A549 (cell line): ENCODE measurements at regions of chr2 and their contacts with region 1.

Region 1: DNA sequence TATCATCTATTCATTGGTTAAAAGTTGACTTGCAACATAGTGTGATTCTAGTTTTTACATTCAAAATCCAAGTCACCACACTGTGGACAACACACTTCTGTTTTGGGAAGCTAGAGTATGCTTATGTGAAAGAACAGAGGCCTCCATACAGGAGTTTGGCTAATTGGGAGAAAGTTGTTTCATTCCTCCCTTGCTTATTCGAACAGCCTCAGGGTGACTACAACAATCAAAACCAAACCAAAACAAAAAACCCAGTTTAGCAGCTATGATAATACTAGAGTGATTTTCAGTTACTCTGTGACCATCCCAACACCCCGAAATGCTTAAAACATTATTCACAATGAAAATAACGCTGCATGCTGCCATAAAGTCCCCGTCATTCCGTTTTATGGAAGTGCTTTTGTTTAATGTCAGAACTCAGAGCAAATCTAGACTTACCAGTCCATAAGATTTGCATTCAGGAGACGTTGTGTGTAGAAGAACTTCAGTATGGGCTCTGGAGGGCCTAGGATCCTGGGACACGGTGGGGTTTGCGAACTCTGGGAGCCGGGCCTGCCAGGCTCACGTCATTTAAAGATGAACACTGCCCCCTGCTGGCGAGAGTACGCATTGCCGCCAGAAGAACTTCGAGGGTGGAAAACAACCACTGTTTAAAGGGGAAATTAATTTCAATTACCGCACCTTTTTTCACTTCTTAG is 111.4 kb downstream of the FTCDNL1 start:
- DNase-seq: peak; percentile 28 to 65
- ATAC-seq: peak; percentile 58 to 88; a peak in 4 of 6 replicates
- H3K4me3 ChIP-seq: no peak overlapping the region
- H3K27ac ChIP-seq: peak overlapping the region; percentile 36 to 61; a peak in 3 of 6 replicates
- H3K4me1 ChIP-seq: peaks cover 22% of the 10 kb centered on the region
- CTCF ChIP-seq: peak; percentile 88
- EP300 ChIP-seq: no peak
- POLR2A ChIP-seq: no peak
- RAD21 ChIP-seq: peak; percentile 92

Region 2: DNA sequence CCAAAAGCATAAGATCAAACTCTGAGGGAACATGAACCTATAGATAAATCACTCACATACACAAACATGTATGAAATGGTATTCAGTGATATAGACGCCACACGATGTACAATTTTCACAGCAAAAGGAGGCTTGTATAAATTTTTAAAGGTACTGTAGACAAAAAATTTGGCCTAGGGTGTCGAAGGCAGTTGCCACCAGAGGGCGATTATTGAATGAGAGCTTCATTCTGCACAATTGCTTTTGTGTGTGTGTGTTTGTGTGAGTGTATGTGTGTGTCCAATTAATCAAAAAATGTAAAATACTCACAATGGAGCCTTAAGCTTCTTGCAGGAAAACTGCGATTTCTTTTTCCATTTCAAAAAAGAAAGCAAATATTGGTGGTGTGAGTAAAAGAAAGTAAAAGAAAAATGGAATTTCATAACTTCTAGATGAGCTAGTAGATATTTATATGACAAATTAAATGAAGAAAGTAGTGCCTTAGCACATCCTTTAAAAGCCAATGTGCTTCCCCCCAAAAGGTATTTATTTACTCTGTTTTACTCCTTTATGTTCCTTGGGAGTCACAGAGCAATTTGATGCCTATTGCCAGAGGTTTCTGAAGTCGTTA is 1081.9 kb before region 1 on chr2:
- CTCF ChIA-PET with region 1: interaction called, 12 read pairs
- POLR2A ChIA-PET with region 1: no interaction called
- DNase-seq: peak in 1 of 2 experiments; percentile 36
- ATAC-seq: no peak
- H3K4me3 ChIP-seq: no peak overlapping the region
- H3K27ac ChIP-seq: no peak overlapping the region
- H3K4me1 ChIP-seq: no peaks in the 10 kb centered on the region
- CTCF ChIP-seq: peak; percentile 43
- EP300 ChIP-seq: no peak
- POLR2A ChIP-seq: no peak
- RAD21 ChIP-seq: peak; percentile 25 to 37; a peak in 3 of 5 replicates

Region 3: DNA sequence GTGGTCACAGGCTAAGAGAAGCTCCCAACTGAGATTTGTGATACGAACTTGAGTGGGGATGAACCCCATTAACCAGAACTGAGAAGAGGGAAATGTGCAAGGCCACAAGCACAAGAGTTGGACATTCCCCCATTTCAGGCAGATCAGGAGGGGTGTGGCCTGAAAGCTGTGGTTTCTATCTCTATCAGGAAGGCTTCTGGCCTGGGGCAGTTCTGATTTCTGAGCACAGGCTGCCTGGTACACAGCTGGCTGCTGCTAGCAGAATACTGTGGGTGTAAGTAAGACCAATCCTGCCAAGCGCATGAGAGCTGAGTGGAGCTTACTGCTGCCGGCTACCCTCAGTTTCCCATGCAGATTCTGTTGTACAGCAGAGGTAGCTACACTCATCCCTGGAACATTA is 766.4 kb before region 1 on chr2:
- CTCF ChIA-PET with region 1: no interaction called
- POLR2A ChIA-PET with region 1: no interaction called
- DNase-seq: no peak
- ATAC-seq: no peak
- H3K4me3 ChIP-seq: no peak overlapping the region
- H3K27ac ChIP-seq: no peak overlapping the region
- H3K4me1 ChIP-seq: no peaks in the 10 kb centered on the region
- CTCF ChIP-seq: no peak
- EP300 ChIP-seq: no peak
- POLR2A ChIP-seq: no peak
- RAD21 ChIP-seq: no peak

Region 4: GRCh38 chr2:199692489-199692888 is 47.1 kb before region 1 on chr2:
- CTCF ChIA-PET with region 1: interaction called, 17 read pairs
- POLR2A ChIA-PET with region 1: no interaction called
- DNase-seq: no peak
- ATAC-seq: no peak
- H3K4me3 ChIP-seq: no peak overlapping the region
- H3K27ac ChIP-seq: no peak overlapping the region
- H3K4me1 ChIP-seq: no peaks in the 10 kb centered on the region
- CTCF ChIP-seq: no peak
- EP300 ChIP-seq: no peak
- POLR2A ChIP-seq: no peak
- RAD21 ChIP-seq: no peak

Region 5: DNA sequence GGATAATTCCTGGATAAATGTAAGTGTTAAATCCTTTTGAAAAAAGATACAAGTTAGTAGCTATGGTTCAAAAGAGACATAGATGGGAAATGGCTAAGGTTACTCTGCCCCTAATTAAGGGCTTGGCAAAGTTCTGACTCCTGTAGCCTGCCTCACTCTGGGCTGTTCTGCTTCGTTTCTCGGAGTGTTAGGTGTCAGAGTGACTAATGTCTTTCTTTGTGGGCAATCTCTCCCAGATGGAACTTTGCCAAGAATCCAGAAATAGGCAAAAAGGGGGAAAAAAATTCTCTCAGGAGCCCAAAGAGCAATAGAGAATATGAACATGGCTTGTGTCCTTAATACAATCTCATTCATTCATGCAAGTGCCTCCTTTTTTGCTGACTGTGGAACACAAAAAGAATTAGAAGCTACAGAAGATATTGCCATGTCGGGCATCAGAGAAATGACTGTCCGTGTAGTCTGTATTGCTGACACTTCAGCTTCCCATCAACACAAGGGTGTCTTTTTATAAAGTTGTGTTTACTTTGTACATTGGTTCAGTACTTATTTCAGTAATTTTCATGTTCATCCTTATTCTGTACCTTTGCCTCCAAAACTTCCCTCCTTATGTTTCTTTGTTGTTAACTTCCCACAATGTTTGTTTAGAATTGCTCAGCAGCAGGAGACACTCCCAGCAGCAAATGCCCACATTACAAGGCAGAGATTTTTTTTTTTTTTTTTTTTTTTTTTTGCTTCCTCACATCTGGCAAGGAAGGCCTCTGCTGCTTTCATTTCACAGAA is 22.6 kb before region 1 on chr2:
- CTCF ChIA-PET with region 1: interaction called, 20 read pairs
- POLR2A ChIA-PET with region 1: no interaction called
- DNase-seq: peak; percentile 51
- ATAC-seq: peak; percentile 89 to 90
- H3K4me3 ChIP-seq: peak overlapping the region; percentile 9; the same call in 1 of the 3 replicates
- H3K27ac ChIP-seq: peak overlapping the region; percentile 47 to 50; a peak in 4 of 6 replicates
- H3K4me1 ChIP-seq: peaks cover 19% of the 10 kb centered on the region
- CTCF ChIP-seq: no peak
- EP300 ChIP-seq: no peak
- POLR2A ChIP-seq: no peak
- RAD21 ChIP-seq: no peak

Region 6: DNA sequence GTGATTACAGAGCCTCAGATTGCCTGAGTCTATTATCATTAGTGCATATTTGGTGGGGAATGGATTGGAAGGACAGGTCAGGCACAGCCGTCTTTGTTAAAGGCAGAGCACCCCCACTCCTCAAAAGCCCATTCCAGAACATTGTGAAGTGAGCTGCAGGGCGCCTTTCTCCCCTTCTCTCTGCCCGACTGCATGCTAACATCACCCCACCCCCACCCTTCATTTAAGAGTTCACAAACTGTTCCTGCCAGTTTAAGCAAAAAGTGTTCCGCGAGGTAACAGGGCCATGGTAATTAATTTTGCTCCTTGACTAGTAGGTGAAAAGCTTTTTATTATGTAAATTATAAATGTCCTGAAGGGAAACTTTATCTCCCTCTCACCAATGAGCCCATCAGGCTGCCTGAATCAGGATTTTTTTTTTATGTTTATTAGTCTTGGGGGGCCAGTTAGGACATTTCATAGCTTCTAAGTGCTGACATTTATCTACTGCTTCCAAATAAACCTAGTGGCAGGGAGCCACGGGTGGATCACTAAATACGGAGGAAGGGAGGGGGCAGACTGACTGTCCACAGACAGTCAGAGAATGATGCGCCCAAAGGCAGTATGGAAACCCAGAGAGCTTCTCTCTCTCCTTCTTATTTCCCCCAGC is 12.0 kb after region 1 on chr2:
- CTCF ChIA-PET with region 1: interaction called, 33 read pairs
- POLR2A ChIA-PET with region 1: no interaction called
- DNase-seq: no peak
- ATAC-seq: no peak
- H3K4me3 ChIP-seq: no peak overlapping the region
- H3K27ac ChIP-seq: no peak overlapping the region
- H3K4me1 ChIP-seq: no peaks in the 10 kb centered on the region
- CTCF ChIP-seq: no peak
- EP300 ChIP-seq: no peak
- POLR2A ChIP-seq: no peak
- RAD21 ChIP-seq: no peak